ENCODE measurements at regions of chr6 and their contacts with region 1.

Region 1: DNA sequence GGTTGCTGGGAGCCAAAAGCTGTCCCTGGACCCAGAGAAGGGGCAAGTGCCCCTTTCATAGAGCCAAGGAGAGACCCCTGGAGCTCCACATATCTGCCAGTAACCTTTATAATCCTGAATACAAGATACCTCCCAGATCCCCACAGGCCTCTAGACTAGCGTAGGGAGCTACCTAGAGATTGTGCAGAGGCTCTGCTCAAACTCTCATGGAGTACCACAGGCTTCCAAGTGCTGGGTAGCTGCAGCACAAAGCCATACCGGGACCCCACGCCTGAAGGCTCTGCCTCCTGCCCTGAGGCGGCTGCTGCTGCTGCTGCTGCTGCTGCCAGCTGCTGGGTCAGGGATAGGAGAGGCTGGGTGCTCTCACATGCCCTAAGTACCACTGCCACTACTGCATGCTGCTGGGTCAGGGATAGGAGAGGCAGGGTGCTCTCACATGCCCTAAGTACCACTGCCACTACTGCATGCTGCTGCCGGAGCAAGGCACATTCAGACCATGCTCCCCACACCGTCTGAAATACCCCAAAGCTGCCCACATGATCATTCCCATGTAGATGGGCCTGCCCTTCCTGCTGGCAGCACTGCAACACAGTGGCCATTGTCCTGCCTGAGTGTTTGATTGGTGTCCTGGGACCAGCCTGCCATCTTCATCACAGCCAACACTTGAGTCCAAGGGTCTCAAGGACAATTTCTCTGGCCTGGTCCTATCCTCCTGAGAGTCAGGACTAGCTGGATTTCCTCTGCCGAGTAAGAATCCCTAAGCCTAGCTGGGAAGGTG is 1434.3 kb upstream of the ADGRB3 start:
- DNase-seq: no peak
- H3K4me3 Mint-ChIP-seq: no peak overlapping the region
- H3K27ac Mint-ChIP-seq: no peak overlapping the region
- H3K4me1 Mint-ChIP-seq: no peaks in the 10 kb centered on the region
- H3K27me3 Mint-ChIP-seq: no peaks in the 10 kb centered on the region
- CTCF ChIP-seq: no peak

Region 2: GRCh38 chr6:67541586-67541985 is 340.8 kb after region 1 on chr6:
- CTCF ChIA-PET with region 1: no interaction called
- POLR2A ChIA-PET with region 1: no interaction called
- intact Hi-C with region 1: loop called (anchors 10 kb)
- DNase-seq: no peak
- H3K4me3 Mint-ChIP-seq: no peak overlapping the region
- H3K27ac Mint-ChIP-seq: peak overlapping the region; percentile 76
- H3K4me1 Mint-ChIP-seq: peaks cover 9% of the 10 kb centered on the region
- H3K27me3 Mint-ChIP-seq: no peaks in the 10 kb centered on the region
- CTCF ChIP-seq: no peak

Measured in MCF 10A (cell line).